CD14-positive monocyte (primary cell): ENCODE measurements at regions of chr14 and their contacts with region 1.

Region 1: DNA sequence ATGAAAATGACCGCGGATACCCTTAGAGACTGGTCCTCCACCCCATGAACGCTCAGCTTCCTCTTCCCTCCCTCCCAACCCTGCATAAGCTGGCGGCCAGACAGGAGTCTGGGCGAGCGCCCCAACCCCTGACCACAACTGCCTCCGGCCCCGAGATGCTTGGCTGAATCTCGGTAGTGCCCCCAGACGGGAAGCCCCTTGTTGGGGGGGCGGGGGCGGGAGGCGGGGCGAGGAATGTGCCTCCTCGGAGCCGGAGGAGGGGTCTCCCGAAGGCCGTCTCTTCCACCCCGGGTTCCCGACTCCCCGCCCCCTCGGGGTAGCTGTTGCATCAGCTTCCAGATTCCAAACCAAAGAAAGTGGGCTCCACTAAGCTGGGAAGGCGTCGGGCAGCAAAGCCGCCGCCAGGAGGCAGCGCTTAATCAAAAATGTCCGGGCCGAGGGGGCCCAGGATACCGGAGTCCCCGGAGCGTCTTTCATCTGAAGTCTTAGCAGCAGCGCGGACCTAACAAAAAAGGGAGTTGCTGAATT is 7.1 kb upstream of the MRPL52 start:
- DNase-seq: peak; percentile 58 to 77 (median 74)
- H3K4me3 ChIP-seq: peak overlapping the region; percentile 27 to 75 (median 49)
- H3K4me3 Mint-ChIP-seq: peak overlapping the region; percentile 77 to 84
- H3K27ac ChIP-seq: peak overlapping the region; percentile 53 to 79
- H3K27ac Mint-ChIP-seq: peak overlapping the region; percentile 85 to 94 (median 91)
- H3K4me1 ChIP-seq: peaks cover 57 to 66% of the 10 kb centered on the region in 2 donors
- H3K4me1 Mint-ChIP-seq: peaks cover 54% of the 10 kb centered on the region
- H3K27me3 ChIP-seq: no peaks in the 10 kb centered on the region
- H3K27me3 Mint-ChIP-seq: peaks cover 2 to 9% (median 6%) of the 10 kb centered on the region in 3 donors
- CTCF ChIP-seq: peak; percentile 91

Region 2: DNA sequence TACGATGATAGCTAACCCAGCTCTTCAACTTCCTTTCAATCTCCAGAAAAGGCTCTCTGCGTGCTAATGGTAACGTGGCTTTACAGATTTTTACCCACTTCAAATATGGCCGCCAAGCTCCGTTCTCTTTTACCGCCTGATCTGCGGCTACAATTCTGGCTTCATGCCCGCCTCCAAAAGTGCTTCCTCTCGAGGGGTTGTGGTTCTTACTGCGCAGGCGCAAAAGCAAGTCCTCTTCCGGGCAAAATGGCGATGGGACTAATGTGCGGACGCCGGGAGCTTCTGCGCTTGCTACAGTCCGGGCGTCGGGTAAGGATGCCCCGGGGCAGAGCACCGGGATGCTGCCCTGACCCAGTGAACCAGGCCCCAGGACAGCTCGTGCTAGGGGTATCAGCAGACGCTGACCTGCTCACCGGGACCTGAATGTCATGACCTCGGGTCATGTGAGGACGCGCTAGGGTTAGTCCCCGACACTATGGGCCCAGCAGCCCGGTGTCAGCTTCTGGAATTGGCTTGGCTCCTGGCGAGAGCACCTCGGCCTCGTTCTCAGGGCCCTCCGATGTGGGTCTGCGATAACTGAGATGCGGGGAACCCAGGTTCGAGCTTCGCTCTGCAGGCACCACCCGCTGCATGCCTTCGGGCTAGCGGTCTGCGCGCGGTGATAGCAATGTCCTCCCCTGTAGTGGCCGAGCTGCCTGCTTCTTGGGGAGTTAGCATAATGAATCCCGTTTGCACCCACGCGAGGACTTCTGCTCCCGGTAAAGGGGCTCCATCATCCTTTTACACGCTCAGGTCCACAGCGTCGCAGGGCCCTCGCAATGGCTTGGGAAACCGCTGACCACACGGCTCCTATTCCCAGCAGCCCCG is 55.9 kb before region 1 on chr14 and contains the start of gene OXA1L:
- intact Hi-C with region 1: loop called (anchors 5 to 10 kb)
- DNase-seq: peak; percentile 96 to 97 (median 97)
- H3K4me3 ChIP-seq: peak within 1 kb of the TSS; percentile 77 to 97 (median 90)
- H3K4me3 Mint-ChIP-seq: peak within 1 kb of the TSS; percentile 88 to 94
- H3K27ac ChIP-seq: peak within 1 kb of the TSS; percentile 88 to 94
- H3K27ac Mint-ChIP-seq: peak within 1 kb of the TSS; percentile 89 to 98 (median 97)
- H3K4me1 ChIP-seq: peaks cover 20 to 25% of the 10 kb centered on the region in 2 donors
- H3K4me1 Mint-ChIP-seq: peaks cover 28% of the 10 kb centered on the region
- H3K27me3 ChIP-seq: no peaks in the 10 kb centered on the region
- H3K27me3 Mint-ChIP-seq: peaks cover 0 to 2% (median 0%) of the 10 kb centered on the region in 3 donors
- CTCF ChIP-seq: no peak
- polyA plus RNA-seq, gene OXA1L: 61.2 to 264 (median 86.9) TPM

Region 3: GRCh38 chr14:22786685-22787084 is 36.0 kb before region 1 on chr14:
- intact Hi-C with region 1: loop called in 1 of 2 experiments (anchors 5 kb)
- DNase-seq: no peak
- H3K4me3 ChIP-seq: no peak overlapping the region
- H3K4me3 Mint-ChIP-seq: no peak overlapping the region
- H3K27ac ChIP-seq: peak overlapping the region in 1 of 2 donors; percentile 13
- H3K27ac Mint-ChIP-seq: peak overlapping the region in 3 of 7 donors; percentile 21 to 50 (median 36)
- H3K4me1 ChIP-seq: peaks cover 56 to 59% of the 10 kb centered on the region in 2 donors
- H3K4me1 Mint-ChIP-seq: peaks cover 60% of the 10 kb centered on the region
- H3K27me3 ChIP-seq: no peaks in the 10 kb centered on the region
- H3K27me3 Mint-ChIP-seq: peaks cover 0 to 2% (median 0%) of the 10 kb centered on the region in 3 donors
- CTCF ChIP-seq: no peak

Region 4: GRCh38 chr14:22861651-22862050 is 39.0 kb after region 1 on chr14:
- intact Hi-C with region 1: no loop called
- DNase-seq: no peak
- H3K4me3 ChIP-seq: no peak overlapping the region
- H3K4me3 Mint-ChIP-seq: no peak overlapping the region
- H3K27ac ChIP-seq: no peak overlapping the region
- H3K27ac Mint-ChIP-seq: no peak overlapping the region
- H3K4me1 ChIP-seq: no peaks in the 10 kb centered on the region
- H3K4me1 Mint-ChIP-seq: no peaks in the 10 kb centered on the region
- H3K27me3 ChIP-seq: peaks cover 0 to 2% of the 10 kb centered on the region in 2 donors
- H3K27me3 Mint-ChIP-seq: peaks cover 21 to 39% (median 28%) of the 10 kb centered on the region in 3 donors
- CTCF ChIP-seq: no peak